CD14-positive monocyte (primary cell): ENCODE measurements at regions of chr14 and their contacts with region 1.

Region 1: DNA sequence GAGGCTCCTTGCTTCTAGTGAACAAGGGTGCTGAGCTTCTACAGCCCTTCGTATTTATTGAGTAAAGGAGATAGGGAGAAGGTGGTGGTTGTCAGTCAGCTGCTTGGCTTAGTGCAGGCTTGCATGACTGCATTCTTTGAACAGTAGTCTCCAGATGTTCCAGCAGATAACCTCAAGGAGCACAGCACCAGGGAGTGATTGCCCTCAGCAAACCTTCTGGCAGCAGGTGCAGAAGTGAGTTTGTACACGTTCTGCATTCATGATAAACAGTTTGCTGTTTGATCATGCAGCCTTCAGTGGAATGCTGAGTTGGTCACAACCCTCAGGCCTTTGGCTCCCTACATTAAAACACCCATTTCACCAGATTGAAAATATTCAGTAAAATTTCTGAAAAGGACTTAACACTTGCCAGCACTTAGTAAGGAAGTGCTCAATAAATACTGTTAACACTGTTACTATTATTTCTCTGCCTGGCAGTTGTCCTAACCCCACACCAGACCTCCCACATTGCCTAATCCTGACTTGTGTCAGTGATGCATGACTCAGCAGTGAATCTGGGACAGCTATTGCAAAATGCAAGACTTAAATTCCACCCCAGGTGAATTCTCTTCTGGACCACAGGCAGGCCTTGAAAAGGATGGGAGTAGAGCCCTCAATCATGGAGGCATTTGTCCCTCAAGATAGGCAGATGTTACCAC is 18.9 kb upstream of the CARMIL3 start:
- DNase-seq: peak; percentile 64 to 84 (median 79)
- H3K4me3 ChIP-seq: no peak overlapping the region
- H3K4me3 Mint-ChIP-seq: no peak overlapping the region
- H3K27ac ChIP-seq: peak overlapping the region in 1 of 2 donors; percentile 58
- H3K27ac Mint-ChIP-seq: peak overlapping the region; percentile 46 to 83 (median 71)
- H3K4me1 ChIP-seq: peaks cover 35 to 43% of the 10 kb centered on the region in 2 donors
- H3K4me1 Mint-ChIP-seq: peaks cover 47% of the 10 kb centered on the region
- H3K27me3 ChIP-seq: no peaks in the 10 kb centered on the region
- H3K27me3 Mint-ChIP-seq: no peaks in the 10 kb centered on the region
- CTCF ChIP-seq: no peak

Region 2: DNA sequence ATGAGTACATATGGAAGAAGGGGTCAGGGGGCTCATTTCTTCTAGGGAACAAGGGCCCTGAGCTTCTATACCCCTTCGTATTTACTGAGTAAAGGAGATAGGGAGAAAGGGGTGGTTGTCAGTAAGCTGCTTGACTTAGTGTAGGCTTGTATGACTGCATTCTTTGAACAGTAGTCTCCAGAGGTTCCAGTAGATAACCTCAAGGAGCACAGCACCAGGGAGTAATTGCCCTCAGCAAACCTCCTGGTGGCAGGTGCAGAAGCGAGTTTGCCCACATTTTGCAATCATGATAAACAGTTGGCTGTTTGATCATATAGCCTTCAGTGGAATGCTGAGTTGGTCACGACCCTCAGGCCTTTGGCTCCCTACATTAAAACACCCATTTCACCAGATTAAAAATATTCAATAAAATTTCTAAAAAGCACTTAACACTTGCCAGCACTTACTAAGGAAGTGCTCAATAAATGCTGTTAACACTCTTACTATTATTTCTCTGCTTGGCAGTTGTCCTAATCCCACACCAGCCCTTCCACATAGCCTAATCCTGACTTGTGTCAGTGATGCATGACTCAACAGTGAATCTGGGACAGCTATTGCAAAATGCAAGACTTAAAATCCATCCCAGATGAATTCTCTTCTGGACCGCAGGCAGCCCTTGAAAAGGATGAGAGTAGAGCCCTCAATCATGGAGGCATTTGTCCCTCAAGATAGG is 47.8 kb before region 1 on chr14:
- intact Hi-C with region 1: loop called in 1 of 2 experiments (anchors 5 kb)
- DNase-seq: peak in 1 of 3 donors; percentile 6
- H3K4me3 ChIP-seq: no peak overlapping the region
- H3K4me3 Mint-ChIP-seq: no peak overlapping the region
- H3K27ac ChIP-seq: no peak overlapping the region
- H3K27ac Mint-ChIP-seq: no peak overlapping the region
- H3K4me1 ChIP-seq: peaks cover 23 to 28% of the 10 kb centered on the region in 2 donors
- H3K4me1 Mint-ChIP-seq: peaks cover 53% of the 10 kb centered on the region
- H3K27me3 ChIP-seq: no peaks in the 10 kb centered on the region
- H3K27me3 Mint-ChIP-seq: peaks cover 0 to 3% (median 2%) of the 10 kb centered on the region in 3 donors
- CTCF ChIP-seq: no peak